ENCODE measurements at regions of chr10 and their contacts with region 1.

Region 1: DNA sequence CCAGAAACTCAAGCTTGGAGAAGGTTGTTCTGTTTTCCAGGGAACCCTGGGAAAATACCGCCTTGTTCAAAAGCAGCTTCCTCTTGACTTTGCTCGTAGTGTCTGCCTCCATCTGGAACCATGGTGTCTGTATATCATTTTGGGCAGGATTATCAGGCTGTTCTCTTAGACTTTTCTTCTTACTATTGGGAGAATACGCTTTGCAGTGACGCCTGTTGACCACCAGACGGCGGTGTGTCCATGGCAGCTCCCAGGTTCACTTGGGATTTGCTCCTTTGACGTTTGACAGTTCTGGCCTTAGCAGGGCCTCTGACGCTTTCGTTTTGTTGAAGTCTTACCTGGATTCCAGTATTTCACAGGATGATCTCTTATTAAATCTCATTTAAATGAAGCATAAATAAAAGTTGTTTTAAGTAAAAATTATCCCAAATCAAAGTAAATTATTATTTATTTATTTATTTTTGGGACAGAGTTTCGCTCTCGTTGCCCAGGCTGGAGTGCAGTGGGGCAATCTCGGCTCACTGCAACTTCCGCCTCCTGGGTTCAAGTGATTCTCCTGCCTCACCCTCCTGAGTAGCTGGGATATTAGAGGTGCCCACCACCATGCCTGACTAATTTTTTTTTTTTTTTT is 41.8 kb upstream of the GJD4 start:
- DNase-seq: peak; percentile 79
- H3K4me3 ChIP-seq: peak overlapping the region in 1 of 2 experiments; percentile 52; a peak in 1 of 4 replicates
- H3K27ac ChIP-seq: no peak overlapping the region
- H3K4me1 ChIP-seq: peaks cover 5 to 12% of the 10 kb centered on the region in 2 experiments; a peak in 2 of 4 replicates
- H3K27me3 ChIP-seq: no peaks in the 10 kb centered on the region
- CTCF ChIP-seq: peak; percentile 99
- EP300 ChIP-seq: no peak
- RAD21 ChIP-seq: peak; percentile 74

Region 2: DNA sequence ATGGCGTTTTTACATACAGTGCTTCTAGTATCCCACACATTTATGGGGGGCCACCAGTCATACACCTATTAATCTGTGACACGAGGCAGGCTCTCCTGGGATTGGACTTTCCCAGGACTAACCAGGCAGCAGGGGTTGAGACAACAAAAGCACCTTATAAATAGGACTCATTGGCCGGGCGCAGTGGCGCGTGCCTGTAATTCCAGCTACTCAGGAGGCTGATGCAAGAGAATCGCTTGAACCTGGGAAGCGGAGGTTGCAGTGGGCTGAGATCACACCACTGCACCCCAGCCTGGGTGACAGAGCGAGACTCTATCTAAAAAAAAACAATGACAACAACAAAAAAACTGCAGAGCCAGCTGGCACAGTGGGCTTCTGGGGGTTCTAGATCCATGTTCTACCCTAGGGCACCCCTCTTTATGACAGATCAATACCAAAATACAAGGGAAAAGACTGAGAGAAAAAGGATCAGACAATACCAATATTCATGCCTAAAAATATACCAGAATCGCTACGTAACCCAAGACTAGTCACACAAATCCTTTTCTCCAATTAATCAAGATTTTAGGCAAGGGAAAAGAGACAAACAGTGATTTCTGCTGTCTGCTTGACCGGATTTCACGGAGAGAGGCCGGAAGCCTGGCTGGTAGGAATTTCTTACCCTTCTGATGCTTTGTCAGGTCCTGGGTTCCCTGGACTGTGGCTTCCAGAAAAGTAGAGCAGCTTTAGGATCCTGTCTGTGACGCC is 325.4 kb before region 1 on chr10:
- CTCF ChIA-PET with region 1: interaction called, 10 read pairs
- POLR2A ChIA-PET with region 1: no interaction called
- DNase-seq: no peak
- H3K4me3 ChIP-seq: no peak overlapping the region
- H3K27ac ChIP-seq: no peak overlapping the region
- H3K4me1 ChIP-seq: no peaks in the 10 kb centered on the region
- H3K27me3 ChIP-seq: no peaks in the 10 kb centered on the region
- CTCF ChIP-seq: no peak
- EP300 ChIP-seq: no peak
- RAD21 ChIP-seq: no peak

Region 3: DNA sequence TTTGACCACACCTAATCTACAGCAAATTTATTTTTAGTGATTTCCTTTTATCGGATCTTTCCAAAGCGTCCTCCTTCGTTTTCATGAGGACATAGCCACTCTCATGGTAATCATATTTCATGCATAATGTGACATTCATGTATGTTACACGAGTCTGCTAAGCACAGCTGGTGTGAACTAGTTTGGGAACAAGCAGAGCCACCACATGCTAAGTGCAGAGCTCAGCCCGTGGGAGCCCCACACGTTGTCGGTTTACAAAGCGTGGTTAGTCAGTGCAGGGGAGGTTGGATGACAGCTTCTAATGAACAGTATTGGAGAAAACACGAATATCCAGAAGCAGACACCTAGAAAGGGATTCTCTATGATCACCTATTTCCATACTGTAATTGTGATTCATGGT is 36.6 kb before region 1 on chr10:
- CTCF ChIA-PET with region 1: interaction called, 11 read pairs
- POLR2A ChIA-PET with region 1: no interaction called
- DNase-seq: no peak
- H3K4me3 ChIP-seq: no peak overlapping the region
- H3K27ac ChIP-seq: no peak overlapping the region
- H3K4me1 ChIP-seq: no peaks in the 10 kb centered on the region; a peak in 1 of 4 replicates
- H3K27me3 ChIP-seq: no peaks in the 10 kb centered on the region
- CTCF ChIP-seq: no peak
- EP300 ChIP-seq: no peak
- RAD21 ChIP-seq: no peak

Region 4: DNA sequence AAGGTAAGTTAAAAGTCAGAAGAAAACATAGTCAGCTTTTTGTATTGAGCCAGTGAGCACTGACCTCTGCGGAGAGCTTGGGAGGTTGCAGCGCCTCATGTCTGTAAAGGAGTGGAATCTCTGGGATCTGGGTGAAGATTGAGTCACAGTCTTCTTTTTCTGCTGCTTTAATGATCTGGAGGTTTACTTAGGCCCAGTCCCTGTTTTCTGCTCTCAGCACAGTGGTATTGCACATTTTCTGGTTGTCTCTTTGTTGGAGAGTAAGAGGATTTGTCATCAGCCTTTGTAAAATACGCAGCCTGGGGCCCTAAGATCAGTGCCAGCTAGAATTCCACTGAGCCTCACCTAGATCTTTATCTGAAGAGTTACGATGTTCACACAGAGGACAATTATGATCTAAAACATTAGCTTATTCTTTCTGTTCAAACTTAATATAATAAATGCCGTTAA is 16.5 kb before region 1 on chr10:
- CTCF ChIA-PET with region 1: interaction called, 22 read pairs
- POLR2A ChIA-PET with region 1: no interaction called
- DNase-seq: no peak
- H3K4me3 ChIP-seq: no peak overlapping the region
- H3K27ac ChIP-seq: peak overlapping the region in 1 of 2 experiments; percentile 20; a peak in 3 of 4 replicates
- H3K4me1 ChIP-seq: peaks cover 2 to 7% of the 10 kb centered on the region in 2 experiments; a peak in 2 of 4 replicates
- H3K27me3 ChIP-seq: no peaks in the 10 kb centered on the region
- CTCF ChIP-seq: peak; percentile 25; the same call in 1 of the 2 replicates
- EP300 ChIP-seq: no peak
- RAD21 ChIP-seq: no peak

Region 5: DNA sequence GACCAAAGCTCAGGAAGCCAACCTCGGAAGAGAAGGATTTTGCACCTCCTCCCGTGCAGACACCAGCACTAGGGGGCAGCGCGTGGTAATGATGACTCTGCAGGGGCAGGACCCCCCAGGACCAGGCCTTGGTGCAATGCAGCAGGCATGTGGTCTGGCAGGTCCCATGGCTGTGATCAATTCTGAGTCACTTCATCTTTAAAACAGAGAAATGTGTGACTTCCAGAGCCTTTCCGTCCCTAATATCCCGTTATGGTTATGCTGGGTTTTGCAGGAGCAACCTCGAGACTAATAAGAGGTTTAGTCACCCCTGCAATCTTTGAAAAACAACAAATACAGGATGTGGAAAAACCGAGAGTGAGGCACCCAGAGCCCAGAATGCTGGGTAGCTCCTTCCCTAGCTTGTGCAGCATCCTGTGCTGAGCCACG is 11.6 kb after region 1 on chr10:
- CTCF ChIA-PET with region 1: interaction called, 68 read pairs
- POLR2A ChIA-PET with region 1: no interaction called
- DNase-seq: no peak
- H3K4me3 ChIP-seq: no peak overlapping the region
- H3K27ac ChIP-seq: no peak overlapping the region
- H3K4me1 ChIP-seq: no peaks in the 10 kb centered on the region; a peak in 1 of 4 replicates
- H3K27me3 ChIP-seq: no peaks in the 10 kb centered on the region
- CTCF ChIP-seq: peak; percentile 47
- EP300 ChIP-seq: no peak
- RAD21 ChIP-seq: no peak

Region 6: GRCh38 chr10:35584946-35585345 is 21.6 kb after region 1 on chr10:
- CTCF ChIA-PET with region 1: interaction called, 68 read pairs
- POLR2A ChIA-PET with region 1: no interaction called
- DNase-seq: no peak
- H3K4me3 ChIP-seq: no peak overlapping the region
- H3K27ac ChIP-seq: no peak overlapping the region
- H3K4me1 ChIP-seq: no peaks in the 10 kb centered on the region; a peak in 1 of 4 replicates
- H3K27me3 ChIP-seq: no peaks in the 10 kb centered on the region
- CTCF ChIP-seq: no peak
- EP300 ChIP-seq: no peak
- RAD21 ChIP-seq: no peak